BJ (cell line): ENCODE measurements at regions of chr5 and their contacts with region 1.

Region 1: DNA sequence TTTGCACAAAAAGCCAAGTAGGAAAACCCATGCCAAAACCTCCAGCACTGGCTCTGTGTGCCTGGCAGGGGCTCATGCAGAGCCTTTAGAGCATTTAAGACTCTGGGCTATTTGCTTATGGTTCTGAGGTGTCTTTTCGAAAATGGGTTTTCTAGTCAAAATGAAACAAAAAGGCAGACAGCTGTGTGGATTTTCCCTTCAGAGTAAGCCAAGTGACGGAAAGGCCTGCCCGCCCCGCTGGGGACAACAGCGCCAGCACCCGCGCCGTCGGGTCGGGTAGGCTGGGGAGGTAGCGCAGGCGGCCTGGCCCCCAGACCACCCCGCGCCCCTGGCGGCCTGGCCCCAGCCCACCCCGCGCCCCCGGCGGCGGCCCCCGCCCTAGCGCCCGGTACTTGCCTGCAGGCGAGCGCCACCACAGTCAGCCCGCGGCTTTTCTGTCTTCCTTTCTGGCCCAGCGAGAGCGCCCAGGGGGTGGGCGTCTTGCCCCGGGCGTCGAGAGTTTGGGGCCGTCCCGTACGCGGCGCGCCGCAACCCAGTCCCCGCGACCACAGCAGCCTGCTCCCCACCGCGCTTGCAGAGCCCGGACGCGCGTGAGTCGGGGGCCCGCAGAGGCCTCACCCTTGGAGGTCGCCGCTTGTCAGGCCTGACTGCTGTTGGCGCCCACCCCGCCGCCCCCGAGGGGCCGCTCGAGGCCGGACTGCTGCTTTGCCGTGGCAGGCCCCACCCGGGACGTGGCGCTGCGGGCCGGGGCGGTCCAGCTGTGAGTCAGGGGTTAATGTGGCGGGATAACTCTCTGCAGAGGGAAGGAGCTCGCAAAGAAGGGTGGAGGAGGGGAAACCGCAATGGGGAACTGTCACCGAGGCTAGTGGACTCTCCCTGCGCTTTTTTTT is at the start of gene TICAM2:
- DNase-seq: no peak
- H3K4me3 ChIP-seq: peak within 1 kb of the TSS; percentile 82
- H3K27me3 ChIP-seq: no peaks in the 10 kb centered on the region
- CTCF ChIP-seq: 0 out of 2 replicates have a peak, but pooled peaks have one; percentile 2
- polyA plus RNA-seq, gene TICAM2: 1.2 and 1.4 TPM in 2 replicates

Region 2: DNA sequence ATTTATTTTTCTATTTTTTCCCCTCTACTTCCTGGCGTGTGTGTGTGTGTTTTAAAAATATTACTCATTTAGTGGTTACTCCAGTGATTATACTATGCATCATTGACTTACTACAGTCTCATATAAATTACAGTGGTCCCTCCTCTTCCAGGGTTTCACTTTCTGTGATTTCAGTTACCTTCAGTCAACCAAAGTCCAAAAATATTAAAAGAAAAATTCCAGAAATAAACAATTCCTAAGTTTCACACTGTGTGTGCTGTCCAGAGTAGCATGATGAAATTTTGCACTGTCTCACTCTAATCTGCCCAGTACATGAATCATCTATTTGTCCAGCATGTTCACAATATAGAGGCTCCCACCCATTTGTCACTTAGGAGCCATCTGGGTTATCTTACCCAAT is 258.1 kb before region 1 on chr5:
- CTCF ChIA-PET with region 1: no interaction called
- POLR2A ChIA-PET with region 1: interaction called, 11 read pairs
- DNase-seq: no peak
- H3K4me3 ChIP-seq: no peak overlapping the region
- H3K27me3 ChIP-seq: no peaks in the 10 kb centered on the region
- CTCF ChIP-seq: no peak